Activated CD4-positive, alpha-beta T cell treated with anti-CD3 and anti-CD28 coated beads for 36 hours (primary cell): ENCODE measurements at regions of chr9 and their contacts with region 1.

Region 1: GRCh38 chr9:128723866-128724743 is at the start of gene ZDHHC12:
- DNase-seq: peak; percentile 100
- ATAC-seq: peak; percentile 98
- H3K4me3 Mint-ChIP-seq: peak within 1 kb of the TSS; percentile 95
- H3K27ac Mint-ChIP-seq: peak within 1 kb of the TSS; percentile 94
- H3K4me1 Mint-ChIP-seq: peaks cover 25% of the 10 kb centered on the region
- H3K27me3 Mint-ChIP-seq: no peaks in the 10 kb centered on the region
- total RNA-seq, gene ZDHHC12: 45.3 to 49.5 TPM

Region 2: GRCh38 chr9:128322404-128323211 is 401.5 kb before region 1 on chr9 and contains the starts of genes COQ4 and TRUB2:
- CTCF ChIA-PET with region 1: interaction called, 5 read pairs
- POLR2A ChIA-PET with region 1: interaction called, 3 read pairs
- intact Hi-C with region 1: loop called in 1 of 2 experiments (anchors 1 kb)
- DNase-seq: peak; percentile 96
- ATAC-seq: peak; percentile 90
- H3K4me3 Mint-ChIP-seq: peak within 1 kb of the TSS; percentile 87
- H3K27ac Mint-ChIP-seq: peak within 1 kb of the TSS; percentile 93
- H3K4me1 Mint-ChIP-seq: peaks cover 19% of the 10 kb centered on the region
- H3K27me3 Mint-ChIP-seq: no peaks in the 10 kb centered on the region
- total RNA-seq, gene COQ4: 32.1 to 38.8 TPM
- total RNA-seq, gene TRUB2: 29.5 to 37.5 TPM

Region 3: DNA sequence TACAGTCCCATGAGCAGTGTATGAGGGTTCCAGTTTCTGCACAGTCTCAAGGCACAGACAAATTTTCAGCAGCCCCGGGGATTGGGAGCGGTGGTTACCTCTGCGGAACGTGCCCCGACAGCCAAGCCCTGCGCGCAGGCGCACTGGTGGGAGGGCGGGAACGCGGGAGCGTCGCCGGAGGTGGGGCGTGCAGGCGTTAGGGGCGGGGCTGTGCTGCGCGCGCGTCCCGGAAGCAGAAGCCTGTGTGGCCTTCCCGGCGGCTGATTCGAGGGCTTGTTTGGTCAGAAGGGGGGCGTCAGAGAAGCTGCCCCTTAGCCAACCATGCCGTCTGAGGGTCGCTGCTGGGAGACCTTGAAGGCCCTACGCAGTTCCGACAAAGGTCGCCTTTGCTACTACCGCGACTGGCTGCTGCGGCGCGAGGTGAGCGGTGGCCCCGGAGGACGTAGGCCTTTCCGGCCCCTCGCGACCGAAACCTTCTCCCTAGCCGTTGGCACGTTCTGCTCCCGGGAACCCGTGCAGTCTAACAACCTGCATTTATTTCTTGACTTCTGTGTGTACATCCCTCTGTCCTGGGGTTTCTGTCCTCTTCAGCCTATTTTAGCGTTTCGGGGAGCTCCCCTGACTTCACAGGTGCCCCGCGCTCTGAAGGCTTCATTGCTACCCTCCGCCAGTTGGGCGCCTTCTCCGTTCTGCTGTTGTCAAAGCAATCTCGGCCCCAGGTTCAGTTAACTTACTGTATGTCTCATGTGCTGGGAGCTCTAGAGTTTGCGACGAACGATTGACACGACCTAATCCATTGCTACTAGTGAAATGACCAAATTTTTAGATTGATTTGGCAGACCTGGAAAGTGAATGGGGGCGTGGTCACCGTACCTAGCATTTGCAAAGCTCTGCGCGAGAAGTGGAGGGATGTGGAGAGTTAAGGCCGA is 219.4 kb before region 1 on chr9 and contains the start of gene GLE1:
- CTCF ChIA-PET with region 1: no interaction called
- POLR2A ChIA-PET with region 1: no interaction called
- intact Hi-C with region 1: loop called in 1 of 2 experiments (anchors 1 kb)
- DNase-seq: peak; percentile 98
- ATAC-seq: peak; percentile 99
- H3K4me3 Mint-ChIP-seq: peak within 1 kb of the TSS; percentile 95
- H3K27ac Mint-ChIP-seq: peak within 1 kb of the TSS; percentile 99
- H3K4me1 Mint-ChIP-seq: peaks cover 21% of the 10 kb centered on the region
- H3K27me3 Mint-ChIP-seq: no peaks in the 10 kb centered on the region
- total RNA-seq, gene GLE1: 52.5 to 54.4 TPM

Region 4: DNA sequence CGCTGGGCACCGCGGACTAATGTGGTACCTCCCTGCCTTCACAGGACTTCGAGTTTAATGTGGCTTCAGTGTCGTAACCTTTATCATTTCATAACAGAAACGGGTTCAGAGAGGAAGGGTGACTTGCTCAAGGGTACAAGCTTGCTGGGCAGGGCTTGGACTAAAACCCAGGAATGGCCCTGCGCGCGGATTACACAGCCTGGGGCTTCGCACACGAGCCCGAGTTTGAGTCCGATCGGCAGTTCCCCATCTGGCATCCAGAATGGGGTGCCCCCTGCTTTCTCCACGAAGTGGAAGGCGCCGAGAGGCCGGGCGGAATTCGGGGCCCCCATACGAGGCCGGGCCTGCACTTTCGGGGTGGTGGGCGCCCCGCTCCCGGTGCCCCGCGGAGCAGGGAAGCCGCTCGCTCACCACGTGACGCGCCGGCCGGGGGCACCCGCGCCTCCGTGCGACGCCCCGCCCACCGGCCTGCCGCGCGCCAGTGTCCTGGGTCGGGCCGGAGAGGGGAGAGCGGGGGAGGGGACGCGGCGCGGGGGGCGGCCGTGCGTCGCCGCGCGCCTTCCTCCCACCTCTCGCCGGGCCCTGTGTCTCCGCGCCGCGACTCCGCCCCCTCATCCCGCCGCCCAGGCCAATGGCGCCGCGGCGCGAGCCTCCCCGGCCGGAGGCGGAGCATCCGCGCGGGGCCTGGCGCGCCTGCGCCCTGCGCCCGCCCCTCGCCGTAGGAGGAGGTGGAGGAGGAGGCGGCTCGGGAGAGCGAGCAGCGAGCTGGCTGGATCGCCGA is 35.4 kb before region 1 on chr9 and contains the start of gene SET:
- CTCF ChIA-PET with region 1: interaction called, 3 read pairs
- POLR2A ChIA-PET with region 1: interaction called, 3 read pairs
- intact Hi-C with region 1: loop called (anchors 1 kb)
- DNase-seq: peak; percentile 96
- ATAC-seq: peak; percentile 71
- H3K4me3 Mint-ChIP-seq: peak within 1 kb of the TSS; percentile 99
- H3K27ac Mint-ChIP-seq: peak within 1 kb of the TSS; percentile 94
- H3K4me1 Mint-ChIP-seq: peaks cover 61% of the 10 kb centered on the region
- H3K27me3 Mint-ChIP-seq: no peaks in the 10 kb centered on the region
- total RNA-seq, gene SET: 673 to 682 TPM

Region 5: DNA sequence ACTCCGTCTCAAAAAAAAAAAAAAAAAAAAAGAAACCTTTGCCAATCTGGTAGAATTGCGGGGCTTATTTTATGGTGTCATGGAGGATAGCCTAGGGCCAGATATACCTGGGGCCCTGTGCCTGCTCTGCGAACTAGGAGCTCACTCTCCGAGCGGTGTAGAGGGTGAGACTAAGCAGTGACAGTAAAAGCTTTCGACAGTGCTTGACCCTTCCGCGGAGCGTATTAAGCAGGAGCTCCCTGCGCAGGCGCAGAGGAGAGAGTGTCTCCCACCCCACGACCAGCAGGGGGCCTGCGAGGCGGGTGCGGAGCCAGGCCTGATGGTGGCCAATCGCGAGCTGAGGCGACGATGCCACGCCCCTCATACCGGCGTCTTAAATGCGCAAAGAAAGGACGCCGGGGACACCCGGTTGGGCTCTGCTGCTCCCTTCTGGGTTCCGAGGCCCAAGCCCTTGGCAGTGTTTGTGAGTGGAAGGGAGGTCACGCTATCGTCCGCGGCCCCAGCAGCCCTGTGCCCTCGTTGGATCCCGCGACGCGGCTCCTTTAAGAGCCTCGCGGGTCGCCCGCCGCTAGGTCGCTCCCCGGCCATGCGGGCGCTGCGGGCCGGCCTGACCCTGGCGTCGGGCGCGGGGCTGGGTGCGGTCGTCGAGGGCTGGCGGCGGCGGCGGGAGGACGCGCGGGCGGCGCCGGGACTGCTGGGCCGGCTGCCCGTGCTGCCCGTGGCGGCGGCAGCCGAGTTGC is 94.2 kb after region 1 on chr9 and contains the start of gene ENDOG:
- CTCF ChIA-PET with region 1: interaction called, 6 read pairs
- POLR2A ChIA-PET with region 1: interaction called, 4 read pairs
- intact Hi-C with region 1: loop called in 1 of 2 experiments (anchors 1 kb)
- DNase-seq: peak; percentile 98
- ATAC-seq: peak; percentile 98
- H3K4me3 Mint-ChIP-seq: peak within 1 kb of the TSS; percentile 76
- H3K27ac Mint-ChIP-seq: peak within 1 kb of the TSS; percentile 80
- H3K4me1 Mint-ChIP-seq: peaks cover 13% of the 10 kb centered on the region
- H3K27me3 Mint-ChIP-seq: no peaks in the 10 kb centered on the region
- total RNA-seq, gene ENDOG: 7.3 to 9.3 TPM

Region 6: GRCh38 chr9:129036241-129036922 is 312.3 kb after region 1 on chr9 and contains the start of gene MIGA2:
- CTCF ChIA-PET with region 1: no interaction called
- POLR2A ChIA-PET with region 1: no interaction called
- intact Hi-C with region 1: loop called in 1 of 2 experiments (anchors 1 kb)
- DNase-seq: peak; percentile 96
- ATAC-seq: peak; percentile 99
- H3K4me3 Mint-ChIP-seq: peak within 1 kb of the TSS; percentile 98
- H3K27ac Mint-ChIP-seq: peak within 1 kb of the TSS; percentile 83
- H3K4me1 Mint-ChIP-seq: peaks cover 27% of the 10 kb centered on the region
- H3K27me3 Mint-ChIP-seq: no peaks in the 10 kb centered on the region
- total RNA-seq, gene MIGA2: 15.7 to 25.8 TPM

Region 7: GRCh38 chr9:130352081-130352480 is 1628.0 kb after region 1 on chr9:
- CTCF ChIA-PET with region 1: no interaction called
- POLR2A ChIA-PET with region 1: no interaction called
- intact Hi-C with region 1: no loop called
- DNase-seq: no peak
- ATAC-seq: no peak
- H3K4me3 Mint-ChIP-seq: no peak overlapping the region
- H3K27ac Mint-ChIP-seq: no peak overlapping the region
- H3K4me1 Mint-ChIP-seq: no peaks in the 10 kb centered on the region
- H3K27me3 Mint-ChIP-seq: no peaks in the 10 kb centered on the region